ENCODE measurements at regions of chr16 and their contacts with region 1.

Region 1: GRCh38 chr16:57300387-57301125 is 16.1 kb upstream of the PLLP start:
- DNase-seq: peak; percentile 99
- ATAC-seq: peak; percentile 93 to 97
- H3K4me3 ChIP-seq: peak overlapping the region; percentile 56
- H3K27ac ChIP-seq: peak overlapping the region; percentile 85
- H3K4me1 ChIP-seq: peaks cover 41% of the 10 kb centered on the region
- H3K27me3 ChIP-seq: no peaks in the 10 kb centered on the region
- CTCF ChIP-seq: peak; percentile 96

Region 2: GRCh38 chr16:57403965-57404817 is 103.6 kb after region 1 on chr16 and contains the start of gene CCL17:
- intact Hi-C with region 1: no loop called
- DNase-seq: no peak
- ATAC-seq: no peak
- H3K4me3 ChIP-seq: no peak within 1 kb of the TSS
- H3K27ac ChIP-seq: no peak within 1 kb of the TSS
- H3K4me1 ChIP-seq: peaks cover 10% of the 10 kb centered on the region
- H3K27me3 ChIP-seq: no peaks in the 10 kb centered on the region
- CTCF ChIP-seq: no peak
- total RNA-seq, gene CCL17: 2.8 TPM

Region 3: DNA sequence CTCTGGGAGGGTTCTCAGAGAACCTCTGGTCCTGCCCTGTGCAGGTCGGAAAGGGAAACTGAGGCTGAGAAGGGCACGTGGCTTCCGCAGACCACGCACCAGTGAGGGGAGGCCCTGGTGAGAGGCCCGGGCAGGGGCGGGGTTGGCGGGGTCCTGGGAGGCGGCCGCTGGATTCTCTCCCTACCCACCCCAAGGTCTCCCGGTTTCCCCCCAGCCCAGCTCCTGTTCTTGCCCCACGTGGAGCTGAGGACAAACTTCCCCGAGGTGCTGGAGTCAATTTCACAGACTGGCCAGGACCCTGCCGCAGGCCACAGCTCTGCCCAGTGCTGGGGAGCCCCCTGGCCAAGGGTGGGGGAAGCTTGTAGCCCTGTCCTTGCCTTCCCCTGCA is 115.6 kb after region 1 on chr16:
- intact Hi-C with region 1: loop called (anchors 5 kb)
- DNase-seq: no peak
- ATAC-seq: peak in 1 of 2 donors; percentile 11
- H3K4me3 ChIP-seq: no peak overlapping the region
- H3K27ac ChIP-seq: no peak overlapping the region
- H3K4me1 ChIP-seq: peaks cover 32% of the 10 kb centered on the region
- H3K27me3 ChIP-seq: no peaks in the 10 kb centered on the region
- CTCF ChIP-seq: no peak